Posterior vena cava (tissue), 2 donors: ENCODE measurements at regions of chr1 and their contacts with region 1.

Region 1: GRCh38 chr1:211616232-211616979 is 37.4 kb upstream of the SLC30A1 start:
- DNase-seq: peak; percentile 90

Region 2: DNA sequence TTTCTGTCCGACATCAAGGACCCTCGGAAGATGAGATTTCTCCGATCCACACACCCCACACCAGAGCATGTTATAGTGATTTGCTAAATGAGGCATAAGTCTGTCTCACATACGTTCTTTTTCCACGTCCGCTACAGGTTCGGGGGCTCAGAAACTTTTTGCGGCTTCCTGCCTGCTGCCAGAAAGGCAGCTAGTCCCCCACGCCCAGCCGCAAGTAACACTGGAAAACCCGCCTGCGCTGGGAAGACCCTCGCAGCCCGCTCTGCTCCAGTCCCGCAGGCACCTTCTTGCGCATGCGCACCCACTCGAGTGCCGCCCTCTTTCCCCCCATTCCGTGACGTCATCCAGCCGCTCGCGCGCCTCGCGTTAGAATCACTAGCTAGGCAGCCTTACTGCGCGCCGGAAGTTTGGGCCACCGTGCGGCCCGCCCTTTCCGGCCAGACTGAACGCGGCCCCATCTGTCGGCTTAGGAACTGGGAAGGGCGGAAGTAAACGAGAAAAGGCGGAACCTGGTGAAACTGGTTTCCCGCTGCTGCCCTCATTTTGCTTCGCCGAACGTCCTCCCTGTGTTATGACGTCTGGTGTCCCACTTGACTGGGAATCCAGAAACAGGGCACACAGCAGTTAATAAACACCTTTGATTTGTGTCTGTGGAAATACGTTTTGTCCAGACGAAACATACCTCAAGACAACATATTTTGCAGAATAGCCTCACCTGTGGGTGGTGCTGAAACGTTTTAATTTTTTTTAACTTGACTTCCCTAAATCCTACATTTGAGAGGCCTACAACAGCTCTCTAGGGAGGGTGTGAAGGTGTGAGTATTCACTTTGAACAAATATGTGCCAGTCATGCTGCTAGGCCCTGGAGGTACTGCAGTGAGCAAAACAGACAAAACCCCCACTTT is 1831.9 kb before region 1 on chr1 and contains the start of gene C1orf74:
- intact Hi-C with region 1: loop called in 1 of 2 experiments (anchors 5 kb)
- DNase-seq: peak; percentile 100
- total RNA-seq, gene C1orf74: 1.1 to 1.3 TPM

Region 3: DNA sequence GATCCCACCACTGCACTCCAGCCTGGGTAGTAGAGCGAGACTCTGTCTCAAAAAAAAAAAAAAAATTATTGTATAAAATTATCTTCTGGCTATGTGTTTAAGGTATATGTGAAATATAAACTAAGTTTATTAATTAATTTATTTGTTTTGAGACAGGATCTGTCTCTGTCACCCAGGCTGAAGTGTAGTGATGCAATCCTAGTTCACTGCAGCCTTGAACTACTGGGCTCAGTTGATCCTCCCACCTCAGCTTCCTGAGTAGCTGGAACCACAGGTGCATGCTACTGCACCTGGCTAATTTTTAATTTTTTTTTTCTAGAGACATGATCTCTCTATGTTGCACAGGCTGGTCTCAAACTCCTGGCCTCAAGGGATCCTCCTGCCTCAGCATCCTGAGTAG is 192.4 kb before region 1 on chr1:
- intact Hi-C with region 1: no loop called
- DNase-seq: no peak